ENCODE measurements at regions of chr20 and their contacts with region 1.

Region 1: GRCh38 chr20:47379433-47380150 is 23.1 kb upstream of the ZMYND8 start:
- DNase-seq: no peak
- H3K4me3 ChIP-seq: no peak overlapping the region
- H3K4me3 Mint-ChIP-seq: no peak overlapping the region
- H3K27ac ChIP-seq: no peak overlapping the region
- H3K27ac Mint-ChIP-seq: peak overlapping the region in 2 of 7 donors; percentile 26 to 79
- H3K4me1 ChIP-seq: peaks cover 8% of the 10 kb centered on the region
- H3K4me1 Mint-ChIP-seq: peaks cover 4 to 16% (median 11%) of the 10 kb centered on the region in 4 donors
- H3K27me3 ChIP-seq: no peaks in the 10 kb centered on the region
- H3K27me3 Mint-ChIP-seq: peaks cover 0 to 2% of the 10 kb centered on the region in 2 donors

Region 2: DNA sequence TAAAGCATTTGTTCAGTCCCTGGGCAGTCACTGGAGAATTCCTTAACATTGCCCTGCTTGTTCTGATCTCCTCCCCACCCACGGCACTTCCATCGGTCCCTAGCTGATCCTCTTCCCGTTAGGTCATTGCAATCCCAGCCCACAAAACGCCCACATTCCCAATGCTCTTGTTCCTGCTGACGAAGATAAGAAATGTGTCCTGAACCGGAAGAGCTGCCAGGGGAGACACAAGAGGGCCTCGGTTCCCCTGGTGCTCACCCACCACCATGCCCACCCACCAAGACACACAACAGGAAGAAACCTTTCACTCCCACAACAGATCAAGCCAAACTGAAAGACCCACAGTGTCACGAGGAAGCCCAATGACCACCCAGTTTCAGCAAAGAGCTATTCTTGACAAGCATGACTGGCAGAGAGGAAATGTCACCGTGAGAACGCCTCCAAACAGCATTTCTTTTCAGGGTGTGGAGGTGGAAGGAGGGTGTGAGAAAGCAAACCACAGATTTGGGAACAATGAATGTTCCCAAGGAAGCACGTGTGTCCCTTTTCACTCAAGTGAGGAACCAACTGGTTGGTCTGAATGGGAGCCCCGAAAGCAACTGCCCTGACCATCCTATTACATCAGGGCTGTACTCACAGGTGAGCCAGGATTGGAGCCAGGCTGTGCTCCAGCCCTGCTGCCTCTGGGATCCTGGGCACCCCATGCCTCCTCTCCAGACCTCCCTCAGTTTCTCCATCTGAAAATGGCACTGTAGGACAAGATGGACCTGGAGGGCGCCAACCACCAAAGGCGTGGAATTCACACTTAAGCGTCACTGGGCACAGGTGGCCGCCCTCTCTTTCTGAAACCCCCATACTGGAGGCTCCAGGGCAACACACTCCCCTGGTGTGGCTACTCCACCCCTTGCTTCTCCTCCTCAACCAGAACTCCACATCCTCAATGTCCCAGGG is 120.6 kb before region 1 on chr20:
- CTCF ChIA-PET with region 1: interaction called, 15 read pairs
- POLR2A ChIA-PET with region 1: no interaction called
- intact Hi-C with region 1: no loop called
- DNase-seq: no peak
- H3K4me3 ChIP-seq: no peak overlapping the region
- H3K4me3 Mint-ChIP-seq: no peak overlapping the region
- H3K27ac ChIP-seq: no peak overlapping the region
- H3K27ac Mint-ChIP-seq: peak overlapping the region in 6 of 7 donors; percentile 28 to 89 (median 56)
- H3K4me1 ChIP-seq: no peaks in the 10 kb centered on the region
- H3K4me1 Mint-ChIP-seq: peaks cover 5 to 20% (median 11%) of the 10 kb centered on the region in 4 donors
- H3K27me3 ChIP-seq: no peaks in the 10 kb centered on the region
- H3K27me3 Mint-ChIP-seq: no peaks in the 10 kb centered on the region

Region 3: DNA sequence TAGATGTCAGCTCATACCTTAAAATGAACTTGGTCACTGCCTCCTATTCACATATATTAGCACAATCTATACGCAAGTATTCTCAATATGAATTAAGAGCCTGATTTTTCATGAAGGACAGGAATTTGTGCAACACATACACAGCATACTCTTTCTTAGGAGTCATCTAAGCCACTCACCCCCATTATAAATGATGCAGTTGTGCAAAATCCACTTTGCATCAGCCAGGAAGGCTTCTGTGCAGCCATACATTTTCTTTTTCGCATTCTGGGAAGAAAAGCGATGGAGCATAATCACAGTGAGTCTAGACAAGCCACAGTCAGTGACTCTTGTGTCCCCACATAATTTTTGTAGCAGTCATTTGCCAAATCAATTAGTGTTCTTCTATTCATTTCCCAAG is 89.6 kb before region 1 on chr20:
- CTCF ChIA-PET with region 1: interaction called, 66 read pairs
- POLR2A ChIA-PET with region 1: no interaction called
- intact Hi-C with region 1: no loop called
- DNase-seq: no peak
- H3K4me3 ChIP-seq: no peak overlapping the region
- H3K4me3 Mint-ChIP-seq: no peak overlapping the region
- H3K27ac ChIP-seq: no peak overlapping the region
- H3K27ac Mint-ChIP-seq: no peak overlapping the region
- H3K4me1 ChIP-seq: no peaks in the 10 kb centered on the region
- H3K4me1 Mint-ChIP-seq: peaks cover 0 to 2% (median 0%) of the 10 kb centered on the region in 4 donors
- H3K27me3 ChIP-seq: no peaks in the 10 kb centered on the region
- H3K27me3 Mint-ChIP-seq: no peaks in the 10 kb centered on the region

Region 4: DNA sequence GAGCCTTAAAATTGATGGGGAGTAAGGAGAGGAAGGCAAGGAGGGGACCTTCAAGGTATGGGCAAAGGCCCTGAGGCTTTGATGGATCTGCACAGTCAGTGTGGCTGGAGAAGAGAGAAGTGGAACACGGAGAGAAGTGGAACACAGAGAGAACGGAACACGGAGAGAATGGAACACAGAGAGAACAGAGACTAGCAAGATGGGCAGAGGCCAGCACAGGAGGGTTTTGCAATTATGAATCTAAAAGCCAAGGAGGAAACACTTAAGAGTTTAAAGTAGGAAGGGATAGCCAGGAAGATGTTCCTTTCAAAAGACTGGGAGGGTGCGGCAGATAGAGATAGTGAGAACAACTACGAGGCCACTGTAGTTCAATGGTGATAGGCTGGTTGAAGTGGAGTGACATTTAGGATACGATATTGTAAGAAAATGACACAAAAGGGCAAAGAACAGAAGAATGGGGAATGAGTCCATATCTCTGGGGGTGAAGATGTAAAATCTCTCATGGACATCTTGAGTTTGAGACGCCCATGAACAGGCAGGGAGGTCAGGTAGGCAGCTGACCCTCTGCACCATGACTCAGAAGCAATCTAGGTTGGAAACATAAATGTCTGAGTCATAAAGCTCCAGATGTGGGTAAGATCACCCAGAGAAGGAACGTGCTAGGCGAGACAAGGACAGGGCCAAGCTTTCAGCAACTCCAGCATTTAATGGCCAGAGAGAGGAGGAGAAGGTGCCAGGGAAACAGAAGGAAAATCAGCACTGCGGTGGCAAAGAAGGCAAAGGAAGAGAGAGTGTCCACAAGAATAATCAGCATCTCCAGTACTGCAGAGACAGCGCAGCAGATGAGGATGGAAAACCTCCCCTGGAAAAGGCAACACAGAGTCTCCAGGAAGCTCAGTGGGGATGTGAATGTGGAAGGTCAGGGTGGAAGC is 48.4 kb before region 1 on chr20:
- CTCF ChIA-PET with region 1: interaction called, 18 read pairs
- POLR2A ChIA-PET with region 1: interaction called, 3 read pairs
- intact Hi-C with region 1: no loop called
- DNase-seq: no peak
- H3K4me3 ChIP-seq: no peak overlapping the region
- H3K4me3 Mint-ChIP-seq: peak overlapping the region in 3 of 8 donors; percentile 1 to 43 (median 12)
- H3K27ac ChIP-seq: no peak overlapping the region
- H3K27ac Mint-ChIP-seq: peak overlapping the region in 6 of 7 donors; percentile 2 to 89 (median 38)
- H3K4me1 ChIP-seq: peaks cover 35% of the 10 kb centered on the region
- H3K4me1 Mint-ChIP-seq: peaks cover 40 to 79% (median 54%) of the 10 kb centered on the region in 4 donors
- H3K27me3 ChIP-seq: no peaks in the 10 kb centered on the region
- H3K27me3 Mint-ChIP-seq: no peaks in the 10 kb centered on the region

Region 5: GRCh38 chr20:47396813-47397461 is 17.3 kb after region 1 on chr20:
- CTCF ChIA-PET with region 1: interaction called, 19 read pairs
- POLR2A ChIA-PET with region 1: no interaction called
- intact Hi-C with region 1: no loop called
- DNase-seq: no peak
- H3K4me3 ChIP-seq: no peak overlapping the region
- H3K4me3 Mint-ChIP-seq: no peak overlapping the region
- H3K27ac ChIP-seq: no peak overlapping the region
- H3K27ac Mint-ChIP-seq: no peak overlapping the region
- H3K4me1 ChIP-seq: no peaks in the 10 kb centered on the region
- H3K4me1 Mint-ChIP-seq: peaks cover 0 to 3% (median 0%) of the 10 kb centered on the region in 4 donors
- H3K27me3 ChIP-seq: no peaks in the 10 kb centered on the region
- H3K27me3 Mint-ChIP-seq: no peaks in the 10 kb centered on the region

Region 6: DNA sequence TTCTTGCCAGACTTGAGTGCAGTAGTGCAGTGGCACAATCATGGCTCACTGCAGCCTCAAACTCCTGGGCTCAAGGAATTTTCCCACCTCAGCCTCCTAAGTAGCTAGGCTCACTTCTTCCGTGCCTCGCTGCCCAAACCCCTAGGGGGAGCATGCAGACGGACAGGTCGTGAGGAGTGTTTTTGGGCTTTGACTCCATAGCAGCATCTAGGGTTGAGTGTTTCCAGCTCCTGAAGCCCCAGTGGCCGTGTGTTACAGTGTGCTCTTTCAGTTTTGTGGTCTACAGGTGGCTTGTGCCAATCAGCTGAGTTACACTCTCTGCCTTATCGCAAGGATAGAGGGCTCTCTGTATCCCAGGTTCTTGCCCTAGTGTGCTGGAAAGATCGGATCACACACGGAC is 155.5 kb after region 1 on chr20:
- CTCF ChIA-PET with region 1: no interaction called
- POLR2A ChIA-PET with region 1: no interaction called
- intact Hi-C with region 1: no loop called
- DNase-seq: no peak
- H3K4me3 ChIP-seq: no peak overlapping the region
- H3K4me3 Mint-ChIP-seq: no peak overlapping the region
- H3K27ac ChIP-seq: no peak overlapping the region
- H3K27ac Mint-ChIP-seq: no peak overlapping the region
- H3K4me1 ChIP-seq: peaks cover 33% of the 10 kb centered on the region
- H3K4me1 Mint-ChIP-seq: peaks cover 35 to 63% (median 45%) of the 10 kb centered on the region in 4 donors
- H3K27me3 ChIP-seq: no peaks in the 10 kb centered on the region
- H3K27me3 Mint-ChIP-seq: no peaks in the 10 kb centered on the region

Region 7: GRCh38 chr20:47620808-47621805 is 241.5 kb after region 1 on chr20:
- CTCF ChIA-PET with region 1: interaction called, 68 read pairs
- POLR2A ChIA-PET with region 1: interaction called, 7 read pairs
- intact Hi-C with region 1: loop called (anchors 1 kb)
- DNase-seq: peak; percentile 39 to 54 (median 46)
- H3K4me3 ChIP-seq: no peak overlapping the region
- H3K4me3 Mint-ChIP-seq: no peak overlapping the region
- H3K27ac ChIP-seq: no peak overlapping the region
- H3K27ac Mint-ChIP-seq: peak overlapping the region in 2 of 7 donors; percentile 15 to 30
- H3K4me1 ChIP-seq: no peaks in the 10 kb centered on the region
- H3K4me1 Mint-ChIP-seq: peaks cover 8 to 20% (median 12%) of the 10 kb centered on the region in 4 donors
- H3K27me3 ChIP-seq: no peaks in the 10 kb centered on the region
- H3K27me3 Mint-ChIP-seq: no peaks in the 10 kb centered on the region

Measured in CD4-positive, alpha-beta memory T cell (primary cell).